ENCODE measurements at regions of chr3 and their contacts with region 1.

Region 1: DNA sequence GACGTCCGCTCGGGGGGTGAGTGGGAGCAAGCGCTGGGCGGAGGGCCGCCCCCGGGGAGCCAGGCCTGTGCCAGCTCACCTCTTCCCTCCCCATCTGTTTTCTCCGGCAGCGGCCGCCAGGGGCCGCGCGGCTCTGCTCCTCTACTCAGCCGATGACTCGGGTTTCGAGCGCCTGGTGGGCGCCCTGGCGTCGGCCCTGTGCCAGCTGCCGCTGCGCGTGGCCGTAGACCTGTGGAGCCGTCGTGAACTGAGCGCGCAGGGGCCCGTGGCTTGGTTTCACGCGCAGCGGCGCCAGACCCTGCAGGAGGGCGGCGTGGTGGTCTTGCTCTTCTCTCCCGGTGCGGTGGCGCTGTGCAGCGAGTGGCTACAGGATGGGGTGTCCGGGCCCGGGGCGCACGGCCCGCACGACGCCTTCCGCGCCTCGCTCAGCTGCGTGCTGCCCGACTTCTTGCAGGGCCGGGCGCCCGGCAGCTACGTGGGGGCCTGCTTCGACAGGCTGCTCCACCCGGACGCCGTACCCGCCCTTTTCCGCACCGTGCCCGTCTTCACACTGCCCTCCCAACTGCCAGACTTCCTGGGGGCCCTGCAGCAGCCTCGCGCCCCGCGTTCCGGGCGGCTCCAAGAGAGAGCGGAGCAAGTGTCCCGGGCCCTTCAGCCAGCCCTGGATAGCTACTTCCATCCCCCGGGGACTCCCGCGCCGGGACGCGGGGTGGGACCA is 632 bp upstream of the CRELD1 start:
- DNase-seq: peak; percentile 91
- H3K4me3 Mint-ChIP-seq: peak overlapping the region; percentile 97
- H3K27ac Mint-ChIP-seq: peak overlapping the region; percentile 95
- H3K4me1 Mint-ChIP-seq: peaks cover 35% of the 10 kb centered on the region
- H3K27me3 Mint-ChIP-seq: peaks cover 8% of the 10 kb centered on the region

Region 2: DNA sequence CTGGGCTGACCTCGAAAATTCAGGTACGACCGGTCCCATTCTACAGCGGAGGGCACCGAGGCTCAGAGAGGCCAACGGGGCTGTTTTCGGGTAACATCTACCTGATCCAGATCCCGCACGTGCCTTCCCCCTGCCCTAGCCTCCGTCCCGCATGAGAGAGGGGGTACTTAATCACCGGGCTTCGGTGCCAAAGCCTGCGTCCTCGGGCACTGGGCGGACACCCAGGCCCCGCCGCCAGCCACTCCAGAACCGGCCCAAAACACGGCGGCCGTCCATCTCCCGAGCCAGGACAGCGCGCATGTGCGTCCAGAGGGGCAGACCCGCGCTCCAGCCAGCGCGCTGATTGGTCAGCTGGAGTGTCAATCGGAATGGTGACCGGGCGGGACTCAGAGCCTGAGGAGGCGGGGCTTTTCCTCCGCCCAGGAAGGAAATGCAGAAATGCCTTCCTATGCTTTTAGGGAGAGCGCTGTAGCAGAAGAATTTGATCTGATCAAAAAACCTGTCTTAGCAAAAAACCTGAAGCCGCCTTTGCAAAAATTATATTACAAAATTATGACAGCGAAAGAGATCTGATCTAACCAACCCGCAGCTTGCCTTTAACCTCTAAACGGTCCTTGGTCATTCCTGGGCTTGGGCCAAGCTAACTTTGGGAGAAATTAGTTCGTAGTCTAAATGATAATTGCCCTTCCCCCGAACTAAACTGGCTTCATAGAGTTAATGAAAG is 89.1 kb before region 1 on chr3 and contains the start of gene RPUSD3:
- CTCF ChIA-PET with region 1: interaction called, 17 read pairs
- DNase-seq: peak; percentile 97
- H3K4me3 Mint-ChIP-seq: peak within 1 kb of the TSS; percentile 98
- H3K27ac Mint-ChIP-seq: peak within 1 kb of the TSS; percentile 90
- H3K4me1 Mint-ChIP-seq: peaks cover 40% of the 10 kb centered on the region
- H3K27me3 Mint-ChIP-seq: no peaks in the 10 kb centered on the region

Region 3: GRCh38 chr3:9915254-9916141 is 17.5 kb before region 1 on chr3:
- CTCF ChIA-PET with region 1: interaction called, 18 read pairs
- DNase-seq: peak; percentile 56
- H3K4me3 Mint-ChIP-seq: peak overlapping the region; percentile 68
- H3K27ac Mint-ChIP-seq: no peak overlapping the region
- H3K4me1 Mint-ChIP-seq: peaks cover 16% of the 10 kb centered on the region
- H3K27me3 Mint-ChIP-seq: peaks cover 59% of the 10 kb centered on the region

Region 4: GRCh38 chr3:10041034-10041433 is 108.0 kb after region 1 on chr3:
- CTCF ChIA-PET with region 1: no interaction called
- DNase-seq: no peak
- H3K4me3 Mint-ChIP-seq: no peak overlapping the region
- H3K27ac Mint-ChIP-seq: peak overlapping the region; percentile 75
- H3K4me1 Mint-ChIP-seq: no peaks in the 10 kb centered on the region
- H3K27me3 Mint-ChIP-seq: no peaks in the 10 kb centered on the region

Region 5: GRCh38 chr3:10286596-10287330 is 353.8 kb after region 1 on chr3:
- CTCF ChIA-PET with region 1: interaction called, 18 read pairs
- DNase-seq: peak; percentile 61
- H3K4me3 Mint-ChIP-seq: no peak overlapping the region
- H3K27ac Mint-ChIP-seq: no peak overlapping the region
- H3K4me1 Mint-ChIP-seq: peaks cover 32% of the 10 kb centered on the region
- H3K27me3 Mint-ChIP-seq: no peaks in the 10 kb centered on the region

Measured in activated naive CD4-positive, alpha-beta T cell treated with anti-CD3 and anti-CD28 coated beads, Interleukin-2, amount 10 ng/mL, durations not matched to agents 7 days and 5 days (primary cell).